Natural killer cell (primary cell): ENCODE measurements at regions of chr15 and their contacts with region 1.

Region 1: GRCh38 chr15:83248151-83249029 is 36.1 kb downstream of the BNC1 start:
- DNase-seq: peak in 1 of 2 donors; percentile 64
- ATAC-seq: peak in 2 of 3 donors; percentile 56 to 76
- H3K4me3 ChIP-seq: no peak overlapping the region
- H3K4me3 Mint-ChIP-seq: no peak overlapping the region
- H3K27ac ChIP-seq: no peak overlapping the region
- H3K27ac Mint-ChIP-seq: no peak overlapping the region
- H3K4me1 ChIP-seq: no peaks in the 10 kb centered on the region
- H3K4me1 Mint-ChIP-seq: no peaks in the 10 kb centered on the region
- H3K27me3 ChIP-seq: peaks cover 6% of the 10 kb centered on the region
- H3K27me3 Mint-ChIP-seq: peaks cover 37 to 44% of the 10 kb centered on the region in 2 donors
- CTCF ChIP-seq: peak; percentile 97

Region 2: DNA sequence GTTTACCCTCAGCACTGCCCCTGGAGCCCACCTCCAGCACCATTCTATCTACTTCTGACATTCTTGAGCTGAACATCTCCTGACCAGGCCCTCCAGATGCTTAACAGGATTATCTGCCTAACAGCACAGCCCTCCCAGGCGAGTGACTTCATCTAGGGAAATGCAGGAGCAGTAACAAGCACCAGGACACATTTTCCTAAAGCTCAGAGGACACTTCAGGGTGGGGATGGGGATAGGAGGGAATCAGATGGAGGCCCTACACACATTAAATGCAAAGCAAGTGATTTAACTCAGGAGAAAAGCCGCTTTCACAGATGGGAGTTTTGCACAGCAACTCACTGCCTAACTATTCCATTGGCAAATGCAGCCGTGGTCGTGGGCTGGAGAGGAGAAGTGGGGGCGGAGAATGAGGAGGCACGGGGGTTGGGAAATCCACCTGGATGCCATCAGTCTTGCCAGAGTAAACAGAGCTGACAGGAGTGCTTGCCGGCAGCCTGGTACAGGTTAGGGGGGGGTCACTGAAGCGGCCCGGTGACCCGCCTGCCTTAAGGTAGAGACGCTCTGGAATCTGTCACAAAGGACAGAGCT is 57.4 kb after region 1 on chr15:
- intact Hi-C with region 1: no loop called
- DNase-seq: no peak
- ATAC-seq: no peak
- H3K4me3 ChIP-seq: no peak overlapping the region
- H3K4me3 Mint-ChIP-seq: no peak overlapping the region
- H3K27ac ChIP-seq: no peak overlapping the region
- H3K27ac Mint-ChIP-seq: no peak overlapping the region
- H3K4me1 ChIP-seq: no peaks in the 10 kb centered on the region
- H3K4me1 Mint-ChIP-seq: no peaks in the 10 kb centered on the region
- H3K27me3 ChIP-seq: peaks cover 5% of the 10 kb centered on the region
- H3K27me3 Mint-ChIP-seq: peaks cover 20 to 41% of the 10 kb centered on the region in 2 donors
- CTCF ChIP-seq: no peak

Region 3: DNA sequence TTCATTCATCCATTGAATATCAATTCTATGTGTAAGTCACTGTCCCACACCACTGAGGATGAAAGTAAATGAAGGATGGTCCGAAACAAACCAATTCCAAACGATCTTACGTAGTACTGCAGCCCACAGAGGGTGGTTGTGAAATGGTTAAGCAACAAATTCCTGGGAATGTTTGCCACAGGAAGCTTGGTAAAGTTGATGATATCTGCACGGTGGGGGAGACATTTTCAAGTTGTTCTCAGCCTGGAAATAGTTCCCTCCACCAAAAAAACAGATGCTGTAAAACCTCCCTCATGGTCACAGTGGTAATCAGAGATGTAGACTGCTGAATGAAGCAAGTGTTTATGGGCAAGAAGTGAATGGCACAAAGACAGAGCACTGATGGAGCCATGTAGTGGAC is 72.0 kb after region 1 on chr15:
- intact Hi-C with region 1: no loop called
- DNase-seq: no peak
- ATAC-seq: no peak
- H3K4me3 ChIP-seq: no peak overlapping the region
- H3K4me3 Mint-ChIP-seq: no peak overlapping the region
- H3K27ac ChIP-seq: no peak overlapping the region
- H3K27ac Mint-ChIP-seq: no peak overlapping the region
- H3K4me1 ChIP-seq: no peaks in the 10 kb centered on the region
- H3K4me1 Mint-ChIP-seq: no peaks in the 10 kb centered on the region
- H3K27me3 ChIP-seq: no peaks in the 10 kb centered on the region
- H3K27me3 Mint-ChIP-seq: peaks cover 5 to 41% of the 10 kb centered on the region in 2 donors
- CTCF ChIP-seq: no peak

Region 4: DNA sequence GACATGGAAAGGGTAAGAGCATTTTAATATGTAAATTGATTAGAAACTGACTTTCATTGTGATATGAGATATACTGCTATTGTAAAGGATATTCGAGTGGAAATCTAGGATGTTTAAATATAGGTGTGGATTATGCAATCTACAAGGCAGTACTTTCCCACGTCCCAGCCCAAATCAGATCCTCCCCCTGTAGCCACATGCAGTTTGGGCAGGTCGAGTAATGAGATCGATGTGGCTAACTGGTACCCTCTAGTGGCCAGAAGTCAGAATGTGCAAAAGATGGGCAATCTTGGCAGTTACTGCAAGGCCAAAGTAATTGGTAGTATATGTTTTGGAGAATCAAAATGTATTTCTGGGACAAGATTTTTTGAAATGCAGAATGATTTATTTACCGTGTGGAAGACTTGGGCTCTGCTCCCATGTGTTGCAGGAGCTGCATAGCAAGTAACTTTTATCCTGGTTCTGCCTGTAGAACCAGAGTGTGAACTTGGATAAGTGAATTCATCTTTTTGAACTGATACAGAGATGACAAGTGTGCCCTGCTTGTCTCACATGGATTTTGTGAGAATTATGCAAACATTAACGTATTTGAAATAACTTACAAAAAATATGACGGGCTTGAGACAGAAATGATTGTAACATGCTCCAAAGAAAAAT is 311.0 kb after region 1 on chr15:
- intact Hi-C with region 1: loop called (anchors 5 kb)
- DNase-seq: peak in 1 of 2 donors; percentile 57
- ATAC-seq: peak in 2 of 3 donors; percentile 57 to 74
- H3K4me3 ChIP-seq: no peak overlapping the region
- H3K4me3 Mint-ChIP-seq: no peak overlapping the region
- H3K27ac ChIP-seq: no peak overlapping the region
- H3K27ac Mint-ChIP-seq: no peak overlapping the region
- H3K4me1 ChIP-seq: no peaks in the 10 kb centered on the region
- H3K4me1 Mint-ChIP-seq: no peaks in the 10 kb centered on the region
- H3K27me3 ChIP-seq: peaks cover 2% of the 10 kb centered on the region
- H3K27me3 Mint-ChIP-seq: peaks cover 4 to 42% of the 10 kb centered on the region in 2 donors
- CTCF ChIP-seq: peak; percentile 71